CD4-positive, alpha-beta memory T cell (primary cell): ENCODE measurements at regions of chr10 and their contacts with region 1.

Region 1: DNA sequence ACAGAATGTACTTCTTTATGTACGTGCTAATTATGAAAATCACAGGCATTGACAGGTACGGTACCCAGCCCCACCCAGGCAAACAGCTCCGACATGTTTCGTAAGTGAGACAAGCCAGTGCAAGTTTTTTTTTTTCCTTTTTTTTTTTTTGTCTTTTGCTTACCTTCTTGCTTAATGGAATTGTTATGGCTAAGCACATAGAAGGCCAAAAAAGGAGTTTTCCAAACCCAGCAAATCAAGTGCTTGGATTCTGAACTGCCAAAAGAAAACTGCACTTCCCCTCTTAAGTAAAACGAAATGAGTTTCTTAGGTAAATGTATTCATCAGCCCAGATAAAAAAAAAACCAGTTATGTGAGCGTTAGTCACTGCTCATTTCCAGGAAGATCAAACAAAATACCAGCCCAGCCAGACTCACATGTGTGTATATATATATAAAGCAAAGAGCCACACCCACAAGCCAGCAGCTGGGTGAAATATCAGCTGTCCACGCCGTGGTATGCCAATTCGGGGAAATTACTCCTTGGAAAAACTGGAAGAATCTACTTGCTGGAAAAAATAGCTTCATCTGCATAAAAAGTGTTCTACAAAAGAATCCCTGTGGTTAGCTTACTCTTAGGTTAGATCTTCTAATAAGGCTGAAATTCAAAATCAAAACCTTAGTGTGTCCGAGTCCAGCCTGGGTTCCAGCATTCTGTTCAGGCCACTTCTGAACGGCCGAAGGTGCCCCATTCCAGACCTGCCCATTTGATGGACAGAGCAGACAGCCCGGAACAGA is 8.0 kb downstream of the KLF6 start:
- DNase-seq: peak; percentile 75 to 87 (median 81)
- H3K4me3 ChIP-seq: peak overlapping the region in 1 of 2 donors; percentile 6
- H3K4me3 Mint-ChIP-seq: peak overlapping the region; percentile 22 to 97 (median 70)
- H3K27ac ChIP-seq: peak overlapping the region; percentile 48
- H3K27ac Mint-ChIP-seq: peak overlapping the region; percentile 63 to 100 (median 97)
- H3K4me1 ChIP-seq: peaks cover 81% of the 10 kb centered on the region
- H3K4me1 Mint-ChIP-seq: peaks cover 51 to 84% (median 68%) of the 10 kb centered on the region in 4 donors
- H3K27me3 ChIP-seq: no peaks in the 10 kb centered on the region
- H3K27me3 Mint-ChIP-seq: no peaks in the 10 kb centered on the region

Region 2: GRCh38 chr10:3668276-3668965 is 108.6 kb before region 1 on chr10:
- CTCF ChIA-PET with region 1: interaction called, 7 read pairs
- POLR2A ChIA-PET with region 1: interaction called, 96 read pairs
- intact Hi-C with region 1: loop called (anchors 2 kb)
- DNase-seq: peak; percentile 83 to 89 (median 85)
- H3K4me3 ChIP-seq: peak overlapping the region; percentile 65 to 92
- H3K4me3 Mint-ChIP-seq: peak overlapping the region; percentile 86 to 96 (median 92)
- H3K27ac ChIP-seq: peak overlapping the region; percentile 67
- H3K27ac Mint-ChIP-seq: peak overlapping the region; percentile 96 to 98 (median 97)
- H3K4me1 ChIP-seq: peaks cover 44% of the 10 kb centered on the region
- H3K4me1 Mint-ChIP-seq: peaks cover 32 to 58% (median 43%) of the 10 kb centered on the region in 4 donors
- H3K27me3 ChIP-seq: no peaks in the 10 kb centered on the region
- H3K27me3 Mint-ChIP-seq: no peaks in the 10 kb centered on the region

Region 3: GRCh38 chr10:3757638-3758490 is 19.1 kb before region 1 on chr10:
- CTCF ChIA-PET with region 1: interaction called, 6 read pairs
- POLR2A ChIA-PET with region 1: interaction called, 201 read pairs
- intact Hi-C with region 1: loop called (anchors 1 kb)
- DNase-seq: peak; percentile 43 to 90 (median 46)
- H3K4me3 ChIP-seq: peak overlapping the region in 1 of 2 donors; percentile 1
- H3K4me3 Mint-ChIP-seq: peak overlapping the region; percentile 26 to 90 (median 72)
- H3K27ac ChIP-seq: peak overlapping the region; percentile 74
- H3K27ac Mint-ChIP-seq: peak overlapping the region; percentile 93 to 98 (median 97)
- H3K4me1 ChIP-seq: peaks cover 81% of the 10 kb centered on the region
- H3K4me1 Mint-ChIP-seq: peaks cover 41 to 81% (median 61%) of the 10 kb centered on the region in 4 donors
- H3K27me3 ChIP-seq: no peaks in the 10 kb centered on the region
- H3K27me3 Mint-ChIP-seq: no peaks in the 10 kb centered on the region

Region 4: GRCh38 chr10:3805791-3806461 is 28.9 kb after region 1 on chr10:
- CTCF ChIA-PET with region 1: interaction called, 39 read pairs
- POLR2A ChIA-PET with region 1: interaction called, 1,468 read pairs
- intact Hi-C with region 1: loop called (anchors 5 kb)
- DNase-seq: peak; percentile 42 to 84 (median 55)
- H3K4me3 ChIP-seq: peak overlapping the region; percentile 2 to 41
- H3K4me3 Mint-ChIP-seq: peak overlapping the region in 7 of 8 donors; percentile 38 to 85 (median 76)
- H3K27ac ChIP-seq: peak overlapping the region; percentile 99
- H3K27ac Mint-ChIP-seq: no peak overlapping the region
- H3K4me1 ChIP-seq: peaks cover 98% of the 10 kb centered on the region
- H3K4me1 Mint-ChIP-seq: peaks cover 4 to 75% (median 69%) of the 10 kb centered on the region in 4 donors
- H3K27me3 ChIP-seq: no peaks in the 10 kb centered on the region
- H3K27me3 Mint-ChIP-seq: no peaks in the 10 kb centered on the region

Region 5: GRCh38 chr10:3828404-3829155 is 51.6 kb after region 1 on chr10:
- CTCF ChIA-PET with region 1: interaction called, 13 read pairs
- POLR2A ChIA-PET with region 1: interaction called, 308 read pairs
- intact Hi-C with region 1: no loop called
- DNase-seq: peak; percentile 53 to 70 (median 62)
- H3K4me3 ChIP-seq: peak overlapping the region; percentile 32 to 55
- H3K4me3 Mint-ChIP-seq: peak overlapping the region; percentile 85 to 91 (median 88)
- H3K27ac ChIP-seq: peak overlapping the region; percentile 78
- H3K27ac Mint-ChIP-seq: peak overlapping the region; percentile 84 to 98 (median 95)
- H3K4me1 ChIP-seq: peaks cover 21% of the 10 kb centered on the region
- H3K4me1 Mint-ChIP-seq: peaks cover 21 to 43% (median 33%) of the 10 kb centered on the region in 4 donors
- H3K27me3 ChIP-seq: no peaks in the 10 kb centered on the region
- H3K27me3 Mint-ChIP-seq: no peaks in the 10 kb centered on the region